WTC11 (cell line): ENCODE measurements at regions of chr19 and their contacts with region 1.

Region 1: DNA sequence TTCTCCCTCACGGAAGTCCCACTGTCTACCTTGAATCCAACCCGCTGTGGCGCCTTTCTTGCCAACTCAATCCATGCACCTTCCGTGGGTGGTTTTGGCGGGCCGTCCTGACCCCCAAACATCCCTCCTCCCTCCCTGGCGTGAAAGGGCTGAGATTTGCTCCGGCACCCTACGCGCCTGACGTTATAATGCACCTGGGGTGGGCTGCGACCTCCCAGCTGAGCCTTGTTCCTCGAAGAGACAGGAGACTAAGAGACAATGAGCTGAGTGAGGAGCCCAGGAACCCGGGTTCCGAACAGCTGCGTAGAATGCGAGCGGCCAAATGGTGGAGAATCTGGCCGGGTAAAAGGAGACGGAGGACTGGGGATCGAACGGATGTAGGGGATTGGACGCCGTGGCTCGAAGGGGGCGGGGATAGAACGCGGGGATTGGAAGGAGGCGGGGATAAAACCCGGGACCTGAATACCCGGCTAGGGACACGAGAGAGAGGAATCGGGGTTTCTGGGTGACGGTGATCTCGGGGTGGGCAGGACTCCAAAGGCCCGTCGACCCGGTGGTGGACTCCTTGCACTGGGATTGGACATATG is at the start of gene CPT1C:
- DNase-seq: peak; percentile 93
- ATAC-seq: peak; percentile 72
- H3K4me3 Mint-ChIP-seq: peak within 1 kb of the TSS; percentile 93
- H3K27ac Mint-ChIP-seq: peak within 1 kb of the TSS; percentile 96
- H3K4me1 Mint-ChIP-seq: peaks cover 37% of the 10 kb centered on the region
- H3K27me3 Mint-ChIP-seq: no peaks in the 10 kb centered on the region
- CTCF ChIP-seq: no peak
- total RNA-seq, gene CPT1C: 74.6 to 89.5 TPM (median 85.4 TPM) in 3 replicates

Region 2: GRCh38 chr19:49752701-49753100 is 62.0 kb after region 1 on chr19:
- CTCF ChIA-PET with region 1: no interaction called
- POLR2A ChIA-PET with region 1: no interaction called
- DNase-seq: no peak
- ATAC-seq: no peak
- H3K4me3 Mint-ChIP-seq: no peak overlapping the region
- H3K27ac Mint-ChIP-seq: no peak overlapping the region
- H3K4me1 Mint-ChIP-seq: peaks cover 3% of the 10 kb centered on the region; the same call in 1 of the 2 replicates
- H3K27me3 Mint-ChIP-seq: peaks cover 18% of the 10 kb centered on the region
- CTCF ChIP-seq: no peak

Region 3: GRCh38 chr19:49766007-49766937 is 75.5 kb after region 1 on chr19:
- CTCF ChIA-PET with region 1: interaction called, 7 read pairs
- POLR2A ChIA-PET with region 1: interaction called, 10 read pairs
- DNase-seq: peak; percentile 99
- ATAC-seq: peak; percentile 89
- H3K4me3 Mint-ChIP-seq: peak overlapping the region; percentile 81
- H3K27ac Mint-ChIP-seq: peak overlapping the region; percentile 100
- H3K4me1 Mint-ChIP-seq: peaks cover 21% of the 10 kb centered on the region
- H3K27me3 Mint-ChIP-seq: no peaks in the 10 kb centered on the region; the same call in 1 of the 2 replicates
- CTCF ChIP-seq: no peak